Natural killer cell (primary cell): ENCODE measurements at regions of chr1 and their contacts with region 1.

Region 1: DNA sequence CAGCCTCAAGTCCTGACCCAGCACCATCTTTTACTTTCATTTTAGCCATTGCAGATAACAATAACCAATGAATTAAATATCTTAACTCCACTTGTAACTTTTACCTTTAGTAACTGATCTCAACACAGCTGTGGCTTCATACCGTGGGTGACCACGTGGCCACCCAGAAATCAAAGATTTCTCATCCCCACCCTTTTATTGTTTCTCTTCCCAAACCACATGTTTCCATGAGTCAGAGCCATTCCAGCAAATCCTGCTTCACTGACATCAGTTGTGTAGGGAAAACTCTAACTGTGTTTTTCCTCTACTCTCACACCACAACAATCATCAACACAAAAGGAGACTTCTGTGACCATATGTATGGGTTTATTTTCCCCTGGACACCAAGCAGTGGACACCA is 25.1 kb upstream of the BRDT start:
- DNase-seq: no peak
- ATAC-seq: no peak
- H3K4me3 ChIP-seq: no peak overlapping the region
- H3K4me3 Mint-ChIP-seq: peak overlapping the region; percentile 7
- H3K27ac ChIP-seq: no peak overlapping the region
- H3K27ac Mint-ChIP-seq: peak overlapping the region; percentile 0 to 51
- H3K4me1 ChIP-seq: peaks cover 9% of the 10 kb centered on the region
- H3K4me1 Mint-ChIP-seq: peaks cover 9% of the 10 kb centered on the region in 2 donors
- H3K27me3 ChIP-seq: no peaks in the 10 kb centered on the region
- H3K27me3 Mint-ChIP-seq: no peaks in the 10 kb centered on the region
- CTCF ChIP-seq: no peak

Region 2: GRCh38 chr1:91732291-91733107 is 191.6 kb before region 1 on chr1:
- intact Hi-C with region 1: loop called (anchors 1 kb)
- DNase-seq: peak; percentile 27 to 52
- ATAC-seq: peak; percentile 39 to 63 (median 62)
- H3K4me3 ChIP-seq: no peak overlapping the region
- H3K4me3 Mint-ChIP-seq: peak overlapping the region; percentile 50
- H3K27ac ChIP-seq: peak overlapping the region; percentile 15
- H3K27ac Mint-ChIP-seq: peak overlapping the region; percentile 88 to 90
- H3K4me1 ChIP-seq: peaks cover 50% of the 10 kb centered on the region
- H3K4me1 Mint-ChIP-seq: peaks cover 84 to 89% of the 10 kb centered on the region in 2 donors
- H3K27me3 ChIP-seq: no peaks in the 10 kb centered on the region
- H3K27me3 Mint-ChIP-seq: no peaks in the 10 kb centered on the region
- CTCF ChIP-seq: no peak

Region 3: GRCh38 chr1:91913018-91913417 is 11.1 kb before region 1 on chr1:
- intact Hi-C with region 1: no loop called
- DNase-seq: no peak
- ATAC-seq: no peak
- H3K4me3 ChIP-seq: no peak overlapping the region
- H3K4me3 Mint-ChIP-seq: no peak overlapping the region
- H3K27ac ChIP-seq: no peak overlapping the region
- H3K27ac Mint-ChIP-seq: no peak overlapping the region
- H3K4me1 ChIP-seq: no peaks in the 10 kb centered on the region
- H3K4me1 Mint-ChIP-seq: no peaks in the 10 kb centered on the region
- H3K27me3 ChIP-seq: no peaks in the 10 kb centered on the region
- H3K27me3 Mint-ChIP-seq: no peaks in the 10 kb centered on the region
- CTCF ChIP-seq: no peak

Region 4: DNA sequence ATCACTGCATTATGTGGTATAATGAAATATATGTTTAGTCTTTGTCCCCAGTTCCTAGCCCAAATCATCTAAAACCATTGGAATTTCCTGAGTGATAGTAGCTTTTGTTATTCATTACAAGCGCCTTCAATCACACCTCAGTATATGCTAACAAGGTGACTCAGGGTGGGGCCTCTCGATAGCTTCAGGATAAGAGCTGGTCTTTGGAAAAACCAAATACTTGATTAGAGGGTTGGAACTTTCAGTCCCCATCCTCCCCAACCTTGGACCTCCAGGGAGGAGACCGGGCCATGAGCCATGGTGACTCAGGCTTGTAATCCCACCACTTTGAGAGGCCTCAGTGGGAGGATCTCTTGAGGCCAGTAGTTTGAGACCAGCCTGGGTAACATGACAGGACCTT is 19.9 kb after region 1 on chr1:
- intact Hi-C with region 1: no loop called
- DNase-seq: no peak
- ATAC-seq: no peak
- H3K4me3 ChIP-seq: no peak overlapping the region
- H3K4me3 Mint-ChIP-seq: no peak overlapping the region
- H3K27ac ChIP-seq: no peak overlapping the region
- H3K27ac Mint-ChIP-seq: no peak overlapping the region
- H3K4me1 ChIP-seq: peaks cover 14% of the 10 kb centered on the region
- H3K4me1 Mint-ChIP-seq: peaks cover 13 to 23% of the 10 kb centered on the region in 2 donors
- H3K27me3 ChIP-seq: no peaks in the 10 kb centered on the region
- H3K27me3 Mint-ChIP-seq: peaks cover 0 to 5% of the 10 kb centered on the region in 2 donors
- CTCF ChIP-seq: no peak